CD8-positive, alpha-beta T cell (primary cell): ENCODE measurements at regions of chr1 and their contacts with region 1.

Region 1: DNA sequence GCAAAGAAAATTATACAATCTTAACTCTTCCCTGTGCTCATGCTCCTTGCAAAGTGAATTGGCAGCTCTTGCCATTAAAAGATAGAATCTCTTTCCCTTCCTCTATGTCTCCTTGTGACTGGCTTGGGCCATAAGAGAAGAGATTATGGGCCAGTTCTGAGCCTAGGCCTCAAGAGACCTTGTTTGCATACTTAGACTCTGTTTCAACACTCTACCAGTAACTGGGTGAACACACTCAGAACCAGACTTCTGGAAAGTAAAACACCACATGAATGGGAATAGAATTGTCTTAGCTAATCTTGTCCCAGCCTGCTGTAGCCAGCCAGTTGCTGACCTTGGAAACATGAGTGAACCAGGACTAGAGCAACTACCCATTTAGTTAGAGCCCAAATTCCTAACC is 15.3 kb upstream of the OR6K3 start:
- DNase-seq: no peak
- ATAC-seq: no peak
- H3K4me3 ChIP-seq: no peak overlapping the region
- H3K4me3 Mint-ChIP-seq: no peak overlapping the region
- H3K27ac ChIP-seq: no peak overlapping the region
- H3K27ac Mint-ChIP-seq: no peak overlapping the region
- H3K4me1 ChIP-seq: no peaks in the 10 kb centered on the region
- H3K4me1 Mint-ChIP-seq: no peaks in the 10 kb centered on the region
- H3K27me3 ChIP-seq: peaks cover 0 to 2% of the 10 kb centered on the region in 2 experiments
- H3K27me3 Mint-ChIP-seq: peaks cover 14% of the 10 kb centered on the region
- CTCF ChIP-seq: no peak

Region 2: GRCh38 chr1:158686111-158687009 is 49.5 kb before region 1 on chr1 and contains the start of gene SPTA1:
- CTCF ChIA-PET with region 1: no interaction called
- POLR2A ChIA-PET with region 1: no interaction called
- intact Hi-C with region 1: loop called in 1 of 2 experiments (anchors 5 kb)
- DNase-seq: no peak
- ATAC-seq: no peak
- H3K4me3 ChIP-seq: no peak within 1 kb of the TSS
- H3K4me3 Mint-ChIP-seq: no peak within 1 kb of the TSS
- H3K27ac ChIP-seq: no peak within 1 kb of the TSS
- H3K27ac Mint-ChIP-seq: no peak within 1 kb of the TSS
- H3K4me1 ChIP-seq: no peaks in the 10 kb centered on the region
- H3K4me1 Mint-ChIP-seq: no peaks in the 10 kb centered on the region
- H3K27me3 ChIP-seq: no peaks in the 10 kb centered on the region
- H3K27me3 Mint-ChIP-seq: peaks cover 24% of the 10 kb centered on the region
- CTCF ChIP-seq: no peak
- total RNA-seq, gene SPTA1: not detected

Region 3: GRCh38 chr1:158716335-158716734 is 19.5 kb before region 1 on chr1:
- CTCF ChIA-PET with region 1: no interaction called
- POLR2A ChIA-PET with region 1: no interaction called
- intact Hi-C with region 1: no loop called
- DNase-seq: no peak
- ATAC-seq: no peak
- H3K4me3 ChIP-seq: no peak overlapping the region
- H3K4me3 Mint-ChIP-seq: no peak overlapping the region
- H3K27ac ChIP-seq: no peak overlapping the region
- H3K27ac Mint-ChIP-seq: no peak overlapping the region
- H3K4me1 ChIP-seq: no peaks in the 10 kb centered on the region
- H3K4me1 Mint-ChIP-seq: no peaks in the 10 kb centered on the region
- H3K27me3 ChIP-seq: peaks cover 0 to 2% of the 10 kb centered on the region in 2 experiments
- H3K27me3 Mint-ChIP-seq: peaks cover 22% of the 10 kb centered on the region
- CTCF ChIP-seq: no peak

Region 4: GRCh38 chr1:158809256-158809655 is 73.4 kb after region 1 on chr1:
- CTCF ChIA-PET with region 1: no interaction called
- POLR2A ChIA-PET with region 1: no interaction called
- intact Hi-C with region 1: no loop called
- DNase-seq: no peak
- ATAC-seq: no peak
- H3K4me3 ChIP-seq: no peak overlapping the region
- H3K4me3 Mint-ChIP-seq: no peak overlapping the region
- H3K27ac ChIP-seq: no peak overlapping the region
- H3K27ac Mint-ChIP-seq: no peak overlapping the region
- H3K4me1 ChIP-seq: no peaks in the 10 kb centered on the region
- H3K4me1 Mint-ChIP-seq: no peaks in the 10 kb centered on the region
- H3K27me3 ChIP-seq: no peaks in the 10 kb centered on the region
- H3K27me3 Mint-ChIP-seq: peaks cover 5% of the 10 kb centered on the region
- CTCF ChIP-seq: no peak